ENCODE measurements at regions of chr7 and their contacts with region 1.

Region 1: GRCh38 chr7:102991540-102992214 is 78.9 kb downstream of the LRRC17 start:
- DNase-seq: peak; percentile 92
- H3K4me3 Mint-ChIP-seq: no peak overlapping the region
- H3K27ac Mint-ChIP-seq: no peak overlapping the region
- H3K4me1 Mint-ChIP-seq: no peaks in the 10 kb centered on the region
- H3K27me3 Mint-ChIP-seq: no peaks in the 10 kb centered on the region
- CTCF ChIP-seq: no peak

Region 2: GRCh38 chr7:102978280-102978679 is 13.4 kb before region 1 on chr7:
- CTCF ChIA-PET with region 1: interaction called, 4 read pairs
- POLR2A ChIA-PET with region 1: interaction called, 4 read pairs
- intact Hi-C with region 1: loop called (anchors 1 kb)
- DNase-seq: peak; percentile 97
- H3K4me3 Mint-ChIP-seq: no peak overlapping the region
- H3K27ac Mint-ChIP-seq: peak overlapping the region; percentile 86
- H3K4me1 Mint-ChIP-seq: peaks cover 9% of the 10 kb centered on the region
- H3K27me3 Mint-ChIP-seq: no peaks in the 10 kb centered on the region
- CTCF ChIP-seq: no peak

Region 3: GRCh38 chr7:103129702-103130549 is 138.2 kb after region 1 on chr7:
- CTCF ChIA-PET with region 1: no interaction called
- POLR2A ChIA-PET with region 1: no interaction called
- intact Hi-C with region 1: no loop called
- DNase-seq: no peak
- H3K4me3 Mint-ChIP-seq: no peak overlapping the region
- H3K27ac Mint-ChIP-seq: no peak overlapping the region
- H3K4me1 Mint-ChIP-seq: peaks cover 8% of the 10 kb centered on the region
- H3K27me3 Mint-ChIP-seq: no peaks in the 10 kb centered on the region
- CTCF ChIP-seq: no peak

Measured in MCF 10A (cell line).